ENCODE measurements at regions of chr11 and their contacts with region 1.

Region 1: DNA sequence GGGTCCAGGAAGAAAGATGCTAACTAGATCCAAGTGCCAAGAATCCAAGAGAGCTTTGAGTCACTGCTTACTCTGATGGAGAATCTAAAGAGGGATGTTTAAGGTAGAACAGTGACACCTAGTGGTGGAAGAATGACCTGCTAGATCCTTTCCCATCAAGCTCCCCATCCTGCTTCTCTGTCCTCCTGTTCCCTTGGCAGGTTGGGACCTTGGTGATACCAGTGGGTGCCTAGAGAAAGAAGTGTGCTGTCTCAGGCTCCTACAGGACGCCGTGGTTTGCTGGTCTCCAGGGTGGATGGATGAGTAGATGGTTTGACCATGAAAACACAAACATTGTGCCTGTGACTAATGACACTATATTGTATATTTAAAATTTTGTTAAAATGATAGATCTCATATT is 383.7 kb downstream of the TMEM135 start:
- DNase-seq: peak; percentile 71

Region 2: GRCh38 chr11:87352759-87353707 is 68.4 kb before region 1 on chr11:
- CTCF ChIA-PET with region 1: interaction called, 18 read pairs
- POLR2A ChIA-PET with region 1: no interaction called
- DNase-seq: peak; percentile 91

Region 3: DNA sequence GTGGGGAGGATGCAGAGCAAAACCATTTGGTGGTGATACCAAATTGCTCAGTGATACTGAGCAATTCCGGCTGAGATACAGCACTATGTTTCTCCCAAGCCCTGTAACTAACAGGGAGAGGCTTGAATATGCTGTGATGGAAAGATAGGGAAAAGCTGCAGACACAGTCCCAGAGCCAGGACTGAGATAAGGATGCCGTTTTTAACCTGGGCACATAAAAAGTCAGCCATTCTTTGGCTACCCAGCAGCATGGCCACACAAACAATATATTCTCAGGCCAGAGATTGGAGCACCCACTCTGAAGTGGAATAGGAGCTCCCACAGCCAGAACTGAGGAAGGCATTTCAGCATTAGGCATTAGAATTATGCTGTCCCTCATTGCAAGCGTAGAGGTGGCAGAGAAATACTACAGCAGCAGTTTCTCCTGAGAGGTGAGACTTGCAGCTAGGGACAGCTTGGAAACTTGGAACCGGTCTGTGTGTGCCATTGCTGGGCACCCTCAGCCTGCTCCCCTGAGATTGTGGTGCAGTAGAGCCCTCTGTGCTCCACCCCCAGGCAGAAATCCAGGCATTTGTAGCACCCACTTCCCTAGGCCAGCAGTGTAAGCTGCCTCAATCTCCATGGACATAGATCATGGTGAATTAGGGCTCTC is 37.2 kb before region 1 on chr11:
- CTCF ChIA-PET with region 1: no interaction called
- POLR2A ChIA-PET with region 1: no interaction called
- DNase-seq: no peak

Region 4: DNA sequence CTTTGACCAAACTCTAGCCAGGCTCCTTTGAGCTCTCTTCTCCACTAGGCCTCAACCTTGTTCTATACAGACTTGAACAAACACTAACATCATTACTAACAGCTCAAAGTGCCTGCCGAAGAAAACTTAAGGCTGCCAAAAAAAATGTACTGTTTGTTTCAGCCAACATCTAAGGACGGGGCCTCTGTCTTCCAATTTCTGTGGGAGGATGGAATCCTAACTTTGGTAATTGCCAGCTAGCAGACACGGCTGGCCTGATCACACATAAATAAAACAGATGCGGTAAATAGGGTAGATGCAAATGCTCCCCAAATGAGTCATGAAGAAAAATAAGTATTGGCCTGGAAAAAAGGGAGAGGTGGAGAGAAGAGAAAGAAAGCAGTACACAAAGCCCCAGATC is 10.6 kb after region 1 on chr11:
- CTCF ChIA-PET with region 1: interaction called, 11 read pairs
- POLR2A ChIA-PET with region 1: no interaction called
- DNase-seq: no peak